ENCODE measurements at regions of chr17 and their contacts with region 1.

Region 1: DNA sequence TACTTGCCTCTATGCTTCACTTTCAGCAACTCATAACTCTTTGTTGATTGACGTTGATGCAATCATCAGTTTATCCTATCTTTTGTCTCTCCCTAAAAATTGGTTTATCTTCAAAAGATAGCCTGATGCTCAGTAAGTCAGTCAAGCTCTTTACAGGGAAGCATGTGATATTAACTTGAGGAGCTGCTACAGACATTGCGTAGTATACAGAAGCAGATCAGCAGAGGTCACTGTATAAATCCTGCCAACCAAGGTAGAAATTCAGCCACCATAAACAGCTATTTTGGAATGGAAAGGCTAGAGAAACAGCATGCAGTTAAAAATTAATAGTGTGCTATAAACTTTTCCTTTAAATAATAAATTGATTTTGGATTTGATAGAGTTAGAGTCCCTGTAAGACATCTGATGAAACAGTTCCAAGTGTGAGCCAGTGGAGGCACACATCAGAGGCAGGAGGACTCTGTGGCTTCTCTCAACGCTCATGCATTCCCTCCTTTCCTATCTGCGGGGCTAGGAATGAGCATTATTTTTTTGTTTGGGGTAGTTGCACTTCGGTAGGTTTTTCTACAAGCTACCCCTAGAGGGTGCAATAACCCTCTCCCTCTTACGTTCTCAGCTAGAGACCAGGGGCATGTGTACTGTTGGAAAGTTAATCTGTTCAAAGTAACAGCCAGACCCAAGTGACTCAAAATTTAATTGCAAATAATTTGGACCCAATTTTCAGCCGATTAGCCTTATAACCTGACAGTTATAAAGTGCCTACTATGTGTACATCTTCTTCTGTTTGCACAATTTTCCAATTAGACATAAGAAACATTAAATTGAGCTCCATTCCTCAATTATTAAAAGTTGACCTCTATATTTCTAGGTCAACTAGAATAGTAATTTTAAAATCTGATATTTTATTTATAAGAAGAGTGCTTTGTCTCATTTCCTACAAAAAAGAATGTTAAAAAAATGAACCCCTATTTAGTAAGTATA is 647.7 kb upstream of the SOX9 start:
- DNase-seq: peak; percentile 73
- H3K4me3 Mint-ChIP-seq: no peak overlapping the region
- H3K27ac Mint-ChIP-seq: no peak overlapping the region
- H3K4me1 Mint-ChIP-seq: peaks cover 5% of the 10 kb centered on the region
- H3K27me3 Mint-ChIP-seq: no peaks in the 10 kb centered on the region
- CTCF ChIP-seq: peak; percentile 63

Region 2: GRCh38 chr17:71118039-71118438 is 355.1 kb before region 1 on chr17:
- CTCF ChIA-PET with region 1: interaction called, 3 read pairs
- POLR2A ChIA-PET with region 1: no interaction called
- intact Hi-C with region 1: loop called (anchors 5 kb)
- DNase-seq: peak; percentile 57
- H3K4me3 Mint-ChIP-seq: no peak overlapping the region
- H3K27ac Mint-ChIP-seq: peak overlapping the region; percentile 5
- H3K4me1 Mint-ChIP-seq: peaks cover 9% of the 10 kb centered on the region
- H3K27me3 Mint-ChIP-seq: no peaks in the 10 kb centered on the region
- CTCF ChIP-seq: peak; percentile 49

Region 3: GRCh38 chr17:71486261-71486660 is 13.2 kb after region 1 on chr17:
- CTCF ChIA-PET with region 1: interaction called, 16 read pairs
- POLR2A ChIA-PET with region 1: no interaction called
- intact Hi-C with region 1: no loop called
- DNase-seq: peak; percentile 25
- H3K4me3 Mint-ChIP-seq: no peak overlapping the region
- H3K27ac Mint-ChIP-seq: no peak overlapping the region
- H3K4me1 Mint-ChIP-seq: no peaks in the 10 kb centered on the region
- H3K27me3 Mint-ChIP-seq: no peaks in the 10 kb centered on the region
- CTCF ChIP-seq: no peak

Region 4: DNA sequence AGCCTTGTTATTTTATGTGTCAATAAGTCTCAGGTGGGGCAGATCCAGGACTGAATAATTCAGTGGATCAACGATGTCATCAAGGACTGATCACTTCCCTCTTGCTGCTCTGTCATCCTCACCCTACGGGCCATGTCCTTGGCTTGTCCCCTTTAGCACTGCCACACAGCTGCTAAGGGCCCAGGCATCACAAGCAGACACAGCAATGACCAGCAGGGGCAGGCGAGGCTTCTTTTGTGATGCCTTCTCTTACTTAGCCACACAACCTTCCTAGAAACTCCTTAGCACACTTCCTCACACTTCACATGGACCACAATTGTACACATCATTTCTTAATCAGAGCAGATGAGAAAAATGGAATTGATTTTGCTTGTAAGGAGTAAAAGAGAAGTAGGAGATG is 291.4 kb after region 1 on chr17:
- CTCF ChIA-PET with region 1: interaction called, 5 read pairs
- POLR2A ChIA-PET with region 1: no interaction called
- intact Hi-C with region 1: loop called (anchors 1 kb)
- DNase-seq: peak; percentile 36
- H3K4me3 Mint-ChIP-seq: no peak overlapping the region
- H3K27ac Mint-ChIP-seq: no peak overlapping the region
- H3K4me1 Mint-ChIP-seq: peaks cover 3% of the 10 kb centered on the region
- H3K27me3 Mint-ChIP-seq: no peaks in the 10 kb centered on the region
- CTCF ChIP-seq: no peak

Measured in MCF 10A (cell line).